MCF 10A (cell line): ENCODE measurements at regions of chr7 and their contacts with region 1.

Region 1: GRCh38 chr7:106659963-106660861 is 746 bp downstream of the CCDC71L start:
- DNase-seq: peak; percentile 81
- H3K4me3 Mint-ChIP-seq: peak overlapping the region; percentile 80
- H3K27ac Mint-ChIP-seq: peak overlapping the region; percentile 83
- H3K4me1 Mint-ChIP-seq: peaks cover 14% of the 10 kb centered on the region
- H3K27me3 Mint-ChIP-seq: no peaks in the 10 kb centered on the region
- CTCF ChIP-seq: peak; percentile 98

Region 2: GRCh38 chr7:106239404-106239803 is 420.8 kb before region 1 on chr7:
- CTCF ChIA-PET with region 1: no interaction called
- POLR2A ChIA-PET with region 1: no interaction called
- intact Hi-C with region 1: no loop called
- DNase-seq: peak; percentile 35
- H3K4me3 Mint-ChIP-seq: no peak overlapping the region
- H3K27ac Mint-ChIP-seq: peak overlapping the region; percentile 39
- H3K4me1 Mint-ChIP-seq: peaks cover 14% of the 10 kb centered on the region
- H3K27me3 Mint-ChIP-seq: no peaks in the 10 kb centered on the region
- CTCF ChIP-seq: no peak

Region 3: GRCh38 chr7:106542550-106543220 is 117.5 kb before region 1 on chr7:
- CTCF ChIA-PET with region 1: interaction called, 133 read pairs
- POLR2A ChIA-PET with region 1: interaction called, 7 read pairs
- intact Hi-C with region 1: loop called (anchors 1 kb)
- DNase-seq: peak; percentile 88
- H3K4me3 Mint-ChIP-seq: no peak overlapping the region
- H3K27ac Mint-ChIP-seq: peak overlapping the region; percentile 59
- H3K4me1 Mint-ChIP-seq: peaks cover 6% of the 10 kb centered on the region
- H3K27me3 Mint-ChIP-seq: no peaks in the 10 kb centered on the region
- CTCF ChIP-seq: peak; percentile 63

Region 4: GRCh38 chr7:106679153-106679931 is 19.1 kb after region 1 on chr7:
- CTCF ChIA-PET with region 1: interaction called, 12 read pairs
- POLR2A ChIA-PET with region 1: interaction called, 3 read pairs
- intact Hi-C with region 1: no loop called
- DNase-seq: peak; percentile 74
- H3K4me3 Mint-ChIP-seq: no peak overlapping the region
- H3K27ac Mint-ChIP-seq: no peak overlapping the region
- H3K4me1 Mint-ChIP-seq: peaks cover 12% of the 10 kb centered on the region
- H3K27me3 Mint-ChIP-seq: no peaks in the 10 kb centered on the region
- CTCF ChIP-seq: no peak

Region 5: DNA sequence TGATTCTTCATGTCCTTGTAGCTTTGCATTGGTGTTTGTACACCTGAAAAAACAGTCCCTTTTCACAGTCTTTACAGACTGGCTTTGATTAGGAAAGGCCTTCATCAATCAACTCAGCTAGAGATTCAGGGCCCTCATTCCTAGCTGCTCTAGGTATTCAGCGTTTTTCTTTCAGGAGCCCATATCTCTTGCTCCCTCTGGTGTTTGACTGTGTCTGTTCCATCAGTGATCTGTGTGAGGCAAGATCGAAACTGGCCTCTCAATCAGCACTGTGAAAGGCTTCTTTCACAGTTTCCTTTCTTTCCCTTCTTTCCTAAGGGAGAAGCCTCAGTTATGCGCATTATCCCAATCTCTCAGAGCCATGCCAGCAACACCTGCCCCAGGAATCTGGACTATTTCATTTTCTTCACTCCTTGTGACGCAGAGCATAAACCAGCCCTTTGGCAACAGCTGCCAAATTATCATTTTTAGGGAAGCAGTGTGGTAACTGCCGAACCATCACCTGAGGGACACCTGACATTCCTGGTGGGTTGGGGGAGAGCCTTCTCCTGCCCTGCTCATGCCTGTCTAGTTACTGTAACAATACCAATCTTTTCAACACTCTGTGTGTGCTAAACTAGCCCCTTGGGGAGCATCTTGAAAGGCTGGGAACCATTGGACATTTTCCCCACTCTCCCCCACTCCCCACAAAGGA is 76.4 kb after region 1 on chr7:
- CTCF ChIA-PET with region 1: interaction called, 94 read pairs
- POLR2A ChIA-PET with region 1: interaction called, 8 read pairs
- intact Hi-C with region 1: loop called (anchors 1 kb)
- DNase-seq: peak; percentile 84
- H3K4me3 Mint-ChIP-seq: peak overlapping the region; percentile 57
- H3K27ac Mint-ChIP-seq: peak overlapping the region; percentile 86
- H3K4me1 Mint-ChIP-seq: peaks cover 9% of the 10 kb centered on the region
- H3K27me3 Mint-ChIP-seq: no peaks in the 10 kb centered on the region
- CTCF ChIP-seq: peak; percentile 72

Region 6: GRCh38 chr7:107150375-107151073 is 490.3 kb after region 1 on chr7:
- CTCF ChIA-PET with region 1: interaction called, 4 read pairs
- POLR2A ChIA-PET with region 1: no interaction called
- intact Hi-C with region 1: loop called (anchors 5 kb)
- DNase-seq: peak; percentile 71
- H3K4me3 Mint-ChIP-seq: no peak overlapping the region
- H3K27ac Mint-ChIP-seq: no peak overlapping the region
- H3K4me1 Mint-ChIP-seq: peaks cover 12% of the 10 kb centered on the region
- H3K27me3 Mint-ChIP-seq: no peaks in the 10 kb centered on the region
- CTCF ChIP-seq: peak; percentile 59